Endothelial cell of umbilical vein (primary cell): ENCODE measurements at regions of chr10 and their contacts with region 1.

Region 1: GRCh38 chr10:43407576-43408330 is 1.2 kb downstream of the HNRNPF start:
- DNase-seq: peak; percentile 83
- H3K4me3 ChIP-seq: peak overlapping the region; percentile 70 to 89 (median 80)
- H3K27ac ChIP-seq: peak overlapping the region; percentile 97
- H3K4me1 ChIP-seq: peaks cover 23% of the 10 kb centered on the region
- H3K27me3 ChIP-seq: no peaks in the 10 kb centered on the region
- CTCF ChIP-seq: peak; percentile 40 to 74
- POLR2A ChIP-seq: peak; percentile 68

Region 2: DNA sequence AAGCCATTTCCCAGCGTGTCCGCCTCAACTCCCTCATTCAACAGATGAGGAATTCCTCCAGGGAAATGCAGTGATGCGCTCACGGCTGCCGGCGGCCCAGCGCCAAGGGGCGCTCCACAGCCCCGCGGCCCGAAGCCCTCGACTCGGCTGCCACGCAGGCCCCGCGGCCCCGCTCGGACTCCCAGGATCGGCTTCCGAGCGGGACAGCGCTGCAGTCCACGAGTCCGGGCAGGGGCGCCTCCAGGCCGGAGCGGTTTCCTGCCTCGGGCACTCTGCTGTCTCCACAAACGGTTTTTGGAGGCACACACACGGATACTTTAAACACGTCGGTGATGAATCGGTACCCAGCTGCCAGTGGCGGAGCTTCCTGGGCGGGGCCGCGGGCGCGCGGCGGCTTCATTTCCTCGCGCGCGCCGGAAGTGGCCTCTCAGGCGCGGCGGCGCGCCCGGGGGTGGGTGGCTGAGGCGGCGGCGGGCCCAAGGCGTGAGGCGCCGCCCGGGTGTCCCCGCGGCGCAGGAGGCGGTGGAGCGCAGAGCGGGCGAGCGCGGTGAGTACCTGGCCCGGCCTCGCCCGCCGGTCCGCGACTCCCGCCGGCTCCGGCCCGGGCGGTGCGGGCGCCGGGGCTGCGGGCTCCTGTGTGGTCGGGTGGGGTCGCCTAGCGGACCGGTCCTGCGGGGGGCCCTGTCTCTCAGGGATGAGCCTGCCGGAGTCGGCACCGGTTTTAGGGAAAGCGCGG is 269.6 kb before region 1 on chr10 and contains the start of gene CSGALNACT2:
- CTCF ChIA-PET with region 1: no interaction called
- POLR2A ChIA-PET with region 1: no interaction called
- dilution Hi-C with region 1: no loop called
- intact Hi-C with region 1: loop called (anchors 5 kb)
- DNase-seq: peak; percentile 76
- H3K4me3 ChIP-seq: peak within 1 kb of the TSS; percentile 75 to 98 (median 92)
- H3K27ac ChIP-seq: peak within 1 kb of the TSS; percentile 81
- H3K4me1 ChIP-seq: peaks cover 24% of the 10 kb centered on the region
- H3K27me3 ChIP-seq: peaks cover 2 to 6% of the 10 kb centered on the region in 2 experiments
- CTCF ChIP-seq: no peak
- POLR2A ChIP-seq: peak; percentile 80
- total RNA-seq, gene CSGALNACT2: 17.7 and 19.9 TPM in 2 replicates

Region 3: GRCh38 chr10:43396928-43397624 is 10.7 kb before region 1 on chr10:
- CTCF ChIA-PET with region 1: interaction called, 17 read pairs
- POLR2A ChIA-PET with region 1: interaction called, 5 read pairs
- dilution Hi-C with region 1: no loop called
- intact Hi-C with region 1: loop called (anchors 1 kb)
- DNase-seq: peak; percentile 84
- H3K4me3 ChIP-seq: peak overlapping the region; percentile 13 to 79 (median 56)
- H3K27ac ChIP-seq: peak overlapping the region; percentile 77
- H3K4me1 ChIP-seq: peaks cover 43% of the 10 kb centered on the region
- H3K27me3 ChIP-seq: no peaks in the 10 kb centered on the region
- CTCF ChIP-seq: no peak
- POLR2A ChIP-seq: peak; percentile 13

Region 4: GRCh38 chr10:43420369-43421200 is 12.8 kb after region 1 on chr10:
- CTCF ChIA-PET with region 1: interaction called, 9 read pairs
- POLR2A ChIA-PET with region 1: interaction called, 9 read pairs
- dilution Hi-C with region 1: no loop called
- intact Hi-C with region 1: loop called (anchors 1 kb)
- DNase-seq: peak; percentile 84
- H3K4me3 ChIP-seq: peak overlapping the region; percentile 11 to 51 (median 37)
- H3K27ac ChIP-seq: peak overlapping the region; percentile 68
- H3K4me1 ChIP-seq: peaks cover 16% of the 10 kb centered on the region
- H3K27me3 ChIP-seq: no peaks in the 10 kb centered on the region
- CTCF ChIP-seq: peak in 1 of 2 donors; percentile 23
- POLR2A ChIP-seq: peak; percentile 68

Region 5: GRCh38 chr10:43436400-43437140 is 28.8 kb after region 1 on chr10 and contains the start of gene ZNF487:
- CTCF ChIA-PET with region 1: interaction called, 5 read pairs
- POLR2A ChIA-PET with region 1: no interaction called
- dilution Hi-C with region 1: no loop called
- intact Hi-C with region 1: loop called (anchors 1 kb)
- DNase-seq: peak; percentile 90
- H3K4me3 ChIP-seq: peak within 1 kb of the TSS; percentile 22 to 84 (median 66)
- H3K27ac ChIP-seq: peak within 1 kb of the TSS; percentile 92
- H3K4me1 ChIP-seq: peaks cover 3% of the 10 kb centered on the region
- H3K27me3 ChIP-seq: no peaks in the 10 kb centered on the region
- CTCF ChIP-seq: peak in 1 of 2 donors; percentile 30
- POLR2A ChIP-seq: peak; percentile 27
- total RNA-seq, gene ZNF487: 2.6 and 3.0 TPM in 2 replicates

Region 6: GRCh38 chr10:43665054-43665453 is 257.3 kb after region 1 on chr10:
- CTCF ChIA-PET with region 1: no interaction called
- POLR2A ChIA-PET with region 1: no interaction called
- dilution Hi-C with region 1: no loop called
- intact Hi-C with region 1: no loop called
- DNase-seq: no peak
- H3K4me3 ChIP-seq: no peak overlapping the region
- H3K27ac ChIP-seq: no peak overlapping the region
- H3K4me1 ChIP-seq: no peaks in the 10 kb centered on the region
- H3K27me3 ChIP-seq: peaks cover 13 to 15% of the 10 kb centered on the region in 2 experiments
- CTCF ChIP-seq: no peak
- POLR2A ChIP-seq: no peak